H1 (cell line): ENCODE measurements at regions of chr10 and their contacts with region 1.

Region 1: GRCh38 chr10:101141616-101142532 is 10.8 kb downstream of the TLX1 start:
- DNase-seq: peak in 1 of 2 experiments; percentile 93
- H3K4me3 ChIP-seq: no peak overlapping the region
- H3K27ac ChIP-seq: no peak overlapping the region
- H3K4me1 ChIP-seq: peaks cover 0 to 18% (median 9%) of the 10 kb centered on the region in 4 experiments; a peak in 5 of 7 replicates
- H3K27me3 ChIP-seq: peaks cover 97 to 100% (median 99%) of the 10 kb centered on the region in 4 experiments
- CTCF ChIP-seq: peak in 2 of 3 experiments; percentile 93 to 95; a peak in 3 of 4 replicates
- EP300 ChIP-seq: no peak
- POLR2A ChIP-seq: no peak
- RAD21 ChIP-seq: peak; percentile 84 to 90

Region 2: DNA sequence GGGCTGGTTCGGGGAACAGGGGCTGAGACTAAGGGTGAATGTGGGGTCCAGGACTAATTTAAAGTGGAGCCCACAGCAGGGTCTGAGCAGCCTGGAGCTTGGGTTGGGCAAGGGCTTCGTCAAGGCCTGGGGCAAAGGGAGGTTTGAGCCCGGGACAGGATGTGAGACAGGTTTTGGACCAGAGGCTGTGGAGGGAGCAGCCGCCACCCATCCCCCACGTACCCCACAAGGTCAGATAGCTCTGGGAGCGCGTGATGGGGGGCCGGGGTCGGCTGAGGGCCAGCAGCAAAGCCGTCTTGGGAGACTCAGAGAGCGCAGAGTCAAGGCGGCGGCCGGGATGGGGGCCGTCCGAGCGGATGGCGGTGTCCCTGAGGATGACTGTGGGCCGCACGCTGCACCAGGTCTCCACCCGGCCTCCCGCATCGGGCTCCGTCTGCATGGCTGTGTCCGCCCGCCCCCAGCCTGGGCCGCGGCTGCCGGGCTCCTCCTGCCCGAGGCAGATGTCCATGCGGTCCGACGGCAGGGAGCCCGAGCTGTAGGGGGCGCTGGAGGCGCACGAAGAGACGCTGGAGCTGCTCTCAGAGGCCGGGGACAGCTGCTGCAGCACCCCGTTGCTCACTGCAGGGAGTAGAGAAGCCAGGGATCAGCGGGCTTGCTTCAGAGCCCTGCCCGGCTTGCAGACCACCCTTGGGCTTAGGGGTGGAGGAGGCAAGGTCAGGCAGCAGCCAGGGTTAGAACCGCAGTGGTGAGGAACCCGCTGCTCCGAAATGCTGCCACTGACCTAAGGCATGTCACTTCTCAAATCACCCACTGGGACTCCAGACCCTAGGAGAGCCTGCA is 123.1 kb before region 1 on chr10:
- CTCF ChIA-PET with region 1: interaction called, 17 read pairs
- POLR2A ChIA-PET with region 1: no interaction called
- DNase-seq: peak in 1 of 2 experiments; percentile 97
- H3K4me3 ChIP-seq: peak overlapping the region; percentile 33 to 59 (median 42); a peak in 7 of 8 replicates
- H3K27ac ChIP-seq: no peak overlapping the region
- H3K4me1 ChIP-seq: peaks cover 0 to 10% (median 5%) of the 10 kb centered on the region in 4 experiments; a peak in 4 of 7 replicates
- H3K27me3 ChIP-seq: peaks cover 14 to 42% (median 32%) of the 10 kb centered on the region in 4 experiments
- CTCF ChIP-seq: peak; percentile 82 to 92 (median 86)
- EP300 ChIP-seq: no peak
- POLR2A ChIP-seq: no peak
- RAD21 ChIP-seq: peak; percentile 71 to 80

Region 3: GRCh38 chr10:101050208-101051069 is 91.4 kb before region 1 on chr10:
- CTCF ChIA-PET with region 1: interaction called, 115 read pairs
- POLR2A ChIA-PET with region 1: interaction called, 6 read pairs
- DNase-seq: peak in 1 of 2 experiments; percentile 99
- H3K4me3 ChIP-seq: peak overlapping the region in 2 of 4 experiments; percentile 10 to 49; a peak in 3 of 8 replicates
- H3K27ac ChIP-seq: no peak overlapping the region
- H3K4me1 ChIP-seq: peaks cover 9 to 23% (median 17%) of the 10 kb centered on the region in 4 experiments
- H3K27me3 ChIP-seq: peaks cover 38 to 66% (median 60%) of the 10 kb centered on the region in 4 experiments
- CTCF ChIP-seq: peak; percentile 73 to 95 (median 84)
- EP300 ChIP-seq: no peak
- POLR2A ChIP-seq: no peak
- RAD21 ChIP-seq: peak; percentile 64 to 74

Region 4: GRCh38 chr10:101087965-101088364 is 53.9 kb before region 1 on chr10:
- CTCF ChIA-PET with region 1: interaction called, 268 read pairs
- POLR2A ChIA-PET with region 1: interaction called, 6 read pairs
- DNase-seq: no peak
- H3K4me3 ChIP-seq: no peak overlapping the region
- H3K27ac ChIP-seq: no peak overlapping the region
- H3K4me1 ChIP-seq: peaks cover 0 to 3% (median 1%) of the 10 kb centered on the region in 4 experiments; a peak in 1 of 7 replicates
- H3K27me3 ChIP-seq: peaks cover 0 to 16% (median 3%) of the 10 kb centered on the region in 4 experiments; a peak in 5 of 7 replicates
- CTCF ChIP-seq: no peak
- EP300 ChIP-seq: no peak
- POLR2A ChIP-seq: no peak
- RAD21 ChIP-seq: no peak

Region 5: GRCh38 chr10:101120884-101121653 is 20.8 kb before region 1 on chr10:
- CTCF ChIA-PET with region 1: interaction called, 47 read pairs
- POLR2A ChIA-PET with region 1: interaction called, 3 read pairs
- DNase-seq: no peak
- H3K4me3 ChIP-seq: peak overlapping the region; percentile 26 to 53 (median 26); a peak in 5 of 8 replicates
- H3K27ac ChIP-seq: no peak overlapping the region
- H3K4me1 ChIP-seq: peaks cover 0 to 9% (median 5%) of the 10 kb centered on the region in 4 experiments; a peak in 5 of 7 replicates
- H3K27me3 ChIP-seq: peaks cover 75 to 84% (median 81%) of the 10 kb centered on the region in 4 experiments
- CTCF ChIP-seq: no peak
- EP300 ChIP-seq: no peak
- POLR2A ChIP-seq: no peak
- RAD21 ChIP-seq: no peak

Region 6: DNA sequence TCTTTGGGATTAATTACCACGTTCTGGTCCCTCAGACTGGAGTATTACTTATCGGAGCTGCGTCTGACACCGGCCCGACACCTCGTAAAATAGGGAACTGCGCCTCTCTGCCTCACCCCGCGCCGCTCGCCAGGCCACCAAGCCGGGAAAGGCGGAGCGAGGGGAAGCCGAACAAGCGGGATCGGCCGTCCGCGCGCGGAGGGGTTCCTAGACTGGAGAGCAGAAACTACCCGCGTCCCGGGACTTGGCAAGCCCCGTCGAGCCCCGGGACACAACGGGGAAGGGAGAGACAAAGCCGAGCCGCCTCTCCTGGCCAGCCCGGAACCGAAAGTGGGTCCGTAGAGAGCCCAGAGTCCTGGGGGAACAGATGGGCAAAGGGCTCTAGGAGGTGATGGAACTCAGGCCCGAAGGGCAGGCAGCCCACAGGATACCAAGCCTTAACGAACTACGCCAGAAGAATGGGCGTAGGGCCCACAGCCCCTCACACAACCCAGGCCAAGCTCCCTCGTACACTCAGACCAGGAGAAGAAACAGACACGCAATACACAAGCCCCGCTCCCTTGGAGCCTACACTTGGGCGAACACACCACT is 80.9 kb after region 1 on chr10:
- CTCF ChIA-PET with region 1: interaction called, 66 read pairs
- POLR2A ChIA-PET with region 1: no interaction called
- DNase-seq: no peak
- H3K4me3 ChIP-seq: no peak overlapping the region
- H3K27ac ChIP-seq: no peak overlapping the region
- H3K4me1 ChIP-seq: peaks cover 0 to 11% (median 5%) of the 10 kb centered on the region in 4 experiments; a peak in 5 of 7 replicates
- H3K27me3 ChIP-seq: peaks cover 96 to 100% (median 100%) of the 10 kb centered on the region in 4 experiments
- CTCF ChIP-seq: no peak
- EP300 ChIP-seq: no peak
- POLR2A ChIP-seq: no peak
- RAD21 ChIP-seq: no peak